Mammary epithelial cell (primary cell): ENCODE measurements at regions of chr15 and their contacts with region 1.

Region 1: GRCh38 chr15:61834076-61834697 is 226.1 kb downstream of the VPS13C start:
- DNase-seq: peak; percentile 55
- H3K4me3 ChIP-seq: no peak overlapping the region
- H3K27ac ChIP-seq: no peak overlapping the region
- H3K4me1 ChIP-seq: no peaks in the 10 kb centered on the region
- H3K27me3 ChIP-seq: no peaks in the 10 kb centered on the region
- CTCF ChIP-seq: peak; percentile 96 to 99

Region 2: DNA sequence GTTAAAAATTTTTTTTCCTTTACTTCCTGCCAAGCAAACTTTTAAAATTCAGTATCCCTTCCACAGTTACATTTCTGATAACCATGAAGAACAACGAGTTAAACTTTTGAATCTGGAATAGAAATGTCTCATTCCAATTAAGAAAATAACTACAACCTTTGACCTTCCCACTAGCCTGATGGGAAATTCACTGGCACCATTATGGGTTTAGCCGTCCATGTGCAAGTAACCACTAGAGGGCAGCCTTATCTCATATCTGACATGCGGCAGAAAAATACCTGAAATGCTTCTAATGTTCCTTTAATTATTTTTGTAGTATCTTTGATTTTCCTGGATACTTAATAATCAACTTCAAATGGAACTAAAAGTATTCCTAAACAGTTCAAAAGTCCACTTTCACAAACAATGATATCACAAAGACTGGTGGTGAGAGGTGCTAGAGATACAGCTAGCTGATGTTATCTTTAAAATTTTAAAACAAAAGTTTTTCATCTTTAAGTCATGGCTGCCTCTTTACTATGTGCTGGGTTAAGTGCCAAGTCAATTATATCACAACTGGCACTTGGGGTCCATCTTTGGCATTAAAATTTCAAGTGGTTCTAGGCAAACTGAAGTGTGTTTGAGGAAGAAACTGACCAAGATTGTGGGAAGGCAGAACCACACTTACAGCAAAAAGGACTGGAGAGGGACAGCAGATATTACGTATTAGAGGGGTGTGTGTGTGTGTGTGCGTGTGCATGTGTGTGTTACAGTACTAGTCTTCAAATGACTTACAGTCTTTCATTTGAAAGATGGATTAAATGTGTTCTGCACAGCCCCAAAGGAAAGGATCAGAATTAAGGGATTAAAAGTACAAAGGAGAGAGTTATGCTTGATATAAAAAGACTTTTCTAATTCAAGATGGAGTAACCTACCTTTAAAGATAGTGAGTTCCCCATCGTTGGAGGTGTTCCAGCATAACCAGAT is 1248.2 kb before region 1 on chr15:
- CTCF ChIA-PET with region 1: interaction called, 3 read pairs
- dilution Hi-C with region 1: no loop called
- in situ Hi-C with region 1: loop called in 1 of 2 experiments (anchors 10 kb)
- intact Hi-C with region 1: loop called (anchors 2 kb)
- DNase-seq: peak; percentile 49
- H3K4me3 ChIP-seq: no peak overlapping the region
- H3K27ac ChIP-seq: no peak overlapping the region
- H3K4me1 ChIP-seq: peaks cover 9% of the 10 kb centered on the region
- H3K27me3 ChIP-seq: no peaks in the 10 kb centered on the region
- CTCF ChIP-seq: peak; percentile 85 to 95

Region 3: GRCh38 chr15:61155741-61156700 is 678.2 kb before region 1 on chr15:
- CTCF ChIA-PET with region 1: no interaction called
- dilution Hi-C with region 1: no loop called
- in situ Hi-C with region 1: loop called in 1 of 2 experiments (anchors 25 kb)
- intact Hi-C with region 1: no loop called
- DNase-seq: peak; percentile 26
- H3K4me3 ChIP-seq: no peak overlapping the region
- H3K27ac ChIP-seq: no peak overlapping the region
- H3K4me1 ChIP-seq: no peaks in the 10 kb centered on the region
- H3K27me3 ChIP-seq: no peaks in the 10 kb centered on the region
- CTCF ChIP-seq: peak in 1 of 2 donors; percentile 19

Region 4: GRCh38 chr15:61195116-61196002 is 638.8 kb before region 1 on chr15:
- CTCF ChIA-PET with region 1: interaction called, 3 read pairs
- dilution Hi-C with region 1: no loop called
- in situ Hi-C with region 1: no loop called
- intact Hi-C with region 1: loop called (anchors 1 kb)
- DNase-seq: peak; percentile 17
- H3K4me3 ChIP-seq: no peak overlapping the region
- H3K27ac ChIP-seq: no peak overlapping the region
- H3K4me1 ChIP-seq: peaks cover 4% of the 10 kb centered on the region
- H3K27me3 ChIP-seq: no peaks in the 10 kb centered on the region
- CTCF ChIP-seq: peak; percentile 65 to 80

Region 5: GRCh38 chr15:61518191-61518950 is 315.8 kb before region 1 on chr15:
- CTCF ChIA-PET with region 1: no interaction called
- dilution Hi-C with region 1: no loop called
- in situ Hi-C with region 1: loop called in 1 of 2 experiments (anchors 25 kb)
- intact Hi-C with region 1: no loop called
- DNase-seq: peak; percentile 20
- H3K4me3 ChIP-seq: no peak overlapping the region
- H3K27ac ChIP-seq: no peak overlapping the region
- H3K4me1 ChIP-seq: peaks cover 7% of the 10 kb centered on the region
- H3K27me3 ChIP-seq: no peaks in the 10 kb centered on the region
- CTCF ChIP-seq: no peak

Region 6: DNA sequence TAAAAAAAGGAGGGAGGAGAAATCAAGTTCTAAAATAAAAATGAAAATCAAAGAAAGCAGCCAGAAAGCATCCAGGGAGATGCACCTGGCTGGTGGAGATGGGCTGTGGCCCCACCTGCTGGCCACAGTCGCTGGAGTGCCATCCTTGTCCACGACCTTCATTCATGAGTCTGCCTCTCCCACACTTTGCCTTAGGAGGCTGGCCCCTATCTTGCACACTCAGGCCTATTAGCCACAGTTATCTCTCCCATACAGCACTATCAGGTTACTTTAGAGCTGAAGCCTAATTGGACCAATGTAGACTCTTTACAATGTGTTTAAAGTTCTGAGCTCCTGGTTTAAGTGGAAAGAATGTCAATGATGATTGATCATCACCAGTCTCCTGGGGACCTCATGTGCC is 213.0 kb before region 1 on chr15:
- CTCF ChIA-PET with region 1: interaction called, 19 read pairs
- dilution Hi-C with region 1: no loop called
- in situ Hi-C with region 1: no loop called
- intact Hi-C with region 1: loop called (anchors 1 kb)
- DNase-seq: peak; percentile 10
- H3K4me3 ChIP-seq: no peak overlapping the region
- H3K27ac ChIP-seq: no peak overlapping the region
- H3K4me1 ChIP-seq: no peaks in the 10 kb centered on the region
- H3K27me3 ChIP-seq: no peaks in the 10 kb centered on the region
- CTCF ChIP-seq: peak; percentile 54 to 69